Endothelial cell of umbilical vein (primary cell): ENCODE measurements at regions of chr15 and their contacts with region 1.

Region 1: GRCh38 chr15:72155635-72156616 is 37.7 kb downstream of the SENP8 start:
- DNase-seq: peak; percentile 83
- H3K4me3 ChIP-seq: peak overlapping the region in 2 of 3 experiments; percentile 36 to 54
- H3K27ac ChIP-seq: no peak overlapping the region
- H3K4me1 ChIP-seq: peaks cover 20% of the 10 kb centered on the region
- H3K27me3 ChIP-seq: no peaks in the 10 kb centered on the region
- CTCF ChIP-seq: peak; percentile 80 to 92
- POLR2A ChIP-seq: no peak

Region 2: GRCh38 chr15:71386448-71387236 is 769.3 kb before region 1 on chr15:
- CTCF ChIA-PET with region 1: interaction called, 4 read pairs
- POLR2A ChIA-PET with region 1: no interaction called
- dilution Hi-C with region 1: no loop called
- intact Hi-C with region 1: loop called (anchors 5 kb)
- DNase-seq: peak; percentile 44
- H3K4me3 ChIP-seq: no peak overlapping the region
- H3K27ac ChIP-seq: no peak overlapping the region
- H3K4me1 ChIP-seq: peaks cover 11% of the 10 kb centered on the region
- H3K27me3 ChIP-seq: no peaks in the 10 kb centered on the region
- CTCF ChIP-seq: peak; percentile 11 to 12
- POLR2A ChIP-seq: no peak

Region 3: GRCh38 chr15:71575474-71576045 is 580.4 kb before region 1 on chr15:
- CTCF ChIA-PET with region 1: interaction called, 16 read pairs
- POLR2A ChIA-PET with region 1: no interaction called
- dilution Hi-C with region 1: no loop called
- intact Hi-C with region 1: no loop called
- DNase-seq: peak; percentile 24
- H3K4me3 ChIP-seq: no peak overlapping the region
- H3K27ac ChIP-seq: no peak overlapping the region
- H3K4me1 ChIP-seq: peaks cover 12% of the 10 kb centered on the region
- H3K27me3 ChIP-seq: no peaks in the 10 kb centered on the region
- CTCF ChIP-seq: peak; percentile 25 to 36
- POLR2A ChIP-seq: no peak

Region 4: DNA sequence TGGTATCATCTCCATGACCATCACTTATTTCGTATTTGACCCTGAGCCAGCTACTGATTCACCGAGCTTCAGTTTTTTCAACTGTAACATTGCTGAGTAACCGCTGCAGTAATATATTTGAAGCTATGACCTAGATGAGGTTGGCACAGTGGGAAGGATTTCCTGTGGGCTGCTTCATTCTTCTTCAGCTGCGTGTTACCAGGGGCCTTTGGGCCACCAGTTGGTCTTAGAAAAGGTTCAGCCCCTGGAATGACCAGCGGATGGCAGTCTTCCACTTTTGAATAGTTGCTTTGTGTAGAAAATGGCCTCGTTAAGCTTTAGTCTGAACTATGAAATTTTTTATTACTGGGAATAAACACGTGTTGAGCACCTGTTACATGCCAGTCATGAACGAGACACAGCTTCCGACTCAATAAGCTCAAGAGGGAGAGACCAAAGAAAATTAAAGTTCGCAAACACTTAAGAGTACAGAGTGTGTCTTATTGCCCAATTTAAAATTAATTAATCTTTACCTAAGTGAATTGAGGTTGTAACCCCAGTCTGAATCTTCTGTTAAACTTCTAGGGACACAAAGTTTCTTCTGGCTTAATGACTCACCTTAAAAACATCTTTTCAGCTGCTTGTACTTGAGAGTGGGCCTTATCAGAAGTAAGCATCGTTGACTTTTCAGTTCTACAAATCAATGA is 403.2 kb before region 1 on chr15:
- CTCF ChIA-PET with region 1: interaction called, 91 read pairs
- POLR2A ChIA-PET with region 1: no interaction called
- dilution Hi-C with region 1: no loop called
- intact Hi-C with region 1: loop called (anchors 1 kb)
- DNase-seq: peak; percentile 92
- H3K4me3 ChIP-seq: no peak overlapping the region
- H3K27ac ChIP-seq: peak overlapping the region; percentile 54
- H3K4me1 ChIP-seq: peaks cover 47% of the 10 kb centered on the region
- H3K27me3 ChIP-seq: no peaks in the 10 kb centered on the region
- CTCF ChIP-seq: peak; percentile 71 to 83
- POLR2A ChIP-seq: no peak

Region 5: GRCh38 chr15:71806452-71806931 is 349.4 kb before region 1 on chr15:
- CTCF ChIA-PET with region 1: interaction called, 97 read pairs
- POLR2A ChIA-PET with region 1: no interaction called
- dilution Hi-C with region 1: no loop called
- intact Hi-C with region 1: loop called (anchors 1 kb)
- DNase-seq: peak; percentile 42
- H3K4me3 ChIP-seq: no peak overlapping the region
- H3K27ac ChIP-seq: no peak overlapping the region
- H3K4me1 ChIP-seq: peaks cover 14% of the 10 kb centered on the region
- H3K27me3 ChIP-seq: no peaks in the 10 kb centered on the region
- CTCF ChIP-seq: no peak
- POLR2A ChIP-seq: no peak

Region 6: GRCh38 chr15:72050700-72051099 is 105.2 kb before region 1 on chr15:
- CTCF ChIA-PET with region 1: no interaction called
- POLR2A ChIA-PET with region 1: no interaction called
- dilution Hi-C with region 1: no loop called
- intact Hi-C with region 1: no loop called
- DNase-seq: no peak
- H3K4me3 ChIP-seq: no peak overlapping the region
- H3K27ac ChIP-seq: no peak overlapping the region
- H3K4me1 ChIP-seq: no peaks in the 10 kb centered on the region
- H3K27me3 ChIP-seq: no peaks in the 10 kb centered on the region
- CTCF ChIP-seq: no peak
- POLR2A ChIP-seq: no peak

Region 7: GRCh38 chr15:72127724-72128322 is 28.1 kb before region 1 on chr15:
- CTCF ChIA-PET with region 1: interaction called, 10 read pairs
- POLR2A ChIA-PET with region 1: no interaction called
- dilution Hi-C with region 1: no loop called
- intact Hi-C with region 1: no loop called
- DNase-seq: no peak
- H3K4me3 ChIP-seq: no peak overlapping the region
- H3K27ac ChIP-seq: no peak overlapping the region
- H3K4me1 ChIP-seq: peaks cover 3% of the 10 kb centered on the region
- H3K27me3 ChIP-seq: no peaks in the 10 kb centered on the region
- CTCF ChIP-seq: no peak
- POLR2A ChIP-seq: no peak